ENCODE measurements at regions of chr2 and their contacts with region 1.

Region 1: GRCh38 chr2:162301151-162301804 is 17.2 kb downstream of the IFIH1 start:
- DNase-seq: peak; percentile 55
- H3K4me3 ChIP-seq: no peak overlapping the region
- H3K27ac ChIP-seq: no peak overlapping the region
- H3K27me3 ChIP-seq: no peaks in the 10 kb centered on the region
- CTCF ChIP-seq: peak; percentile 83

Region 2: GRCh38 chr2:162153608-162154224 is 147.6 kb before region 1 on chr2:
- CTCF ChIA-PET with region 1: interaction called, 344 read pairs
- POLR2A ChIA-PET with region 1: no interaction called
- DNase-seq: no peak
- H3K4me3 ChIP-seq: no peak overlapping the region
- H3K27ac ChIP-seq: no peak overlapping the region
- H3K27me3 ChIP-seq: no peaks in the 10 kb centered on the region
- CTCF ChIP-seq: peak; percentile 71

Region 3: DNA sequence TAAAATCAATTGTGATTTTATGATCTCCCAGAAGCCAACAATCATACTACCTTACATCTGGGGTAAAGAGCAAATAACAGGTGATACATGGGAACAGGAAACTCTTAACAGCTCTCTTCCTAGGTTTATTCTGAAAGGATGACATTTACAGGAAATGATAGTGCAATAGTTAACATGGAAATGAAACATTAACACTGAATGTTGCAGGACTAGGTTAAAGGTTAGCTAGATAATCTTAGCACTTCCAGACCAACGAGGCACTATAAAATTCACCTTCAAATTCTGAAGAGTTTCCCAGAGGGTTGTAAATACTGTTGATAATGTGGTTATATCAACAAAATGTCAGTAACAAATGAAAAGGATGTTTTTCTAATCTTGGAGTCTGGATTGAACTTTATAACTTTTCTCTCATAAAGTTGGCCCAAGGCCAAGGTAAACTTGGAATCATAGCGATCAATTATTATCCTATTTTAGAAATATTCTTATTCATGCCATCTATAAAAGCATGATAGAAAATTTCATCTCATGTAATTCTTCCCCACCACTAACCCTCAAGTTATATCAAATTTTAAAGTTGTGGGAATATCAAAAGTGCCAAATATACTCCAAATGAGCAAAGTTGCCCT is 116.3 kb before region 1 on chr2:
- CTCF ChIA-PET with region 1: interaction called, 10 read pairs
- POLR2A ChIA-PET with region 1: no interaction called
- DNase-seq: no peak
- H3K4me3 ChIP-seq: no peak overlapping the region
- H3K27ac ChIP-seq: no peak overlapping the region
- H3K27me3 ChIP-seq: no peaks in the 10 kb centered on the region
- CTCF ChIP-seq: no peak

Region 4: GRCh38 chr2:162221064-162221463 is 80.2 kb before region 1 on chr2:
- CTCF ChIA-PET with region 1: interaction called, 222 read pairs
- POLR2A ChIA-PET with region 1: interaction called, 3 read pairs
- DNase-seq: no peak
- H3K4me3 ChIP-seq: no peak overlapping the region
- H3K27ac ChIP-seq: no peak overlapping the region
- H3K27me3 ChIP-seq: no peaks in the 10 kb centered on the region
- CTCF ChIP-seq: peak; percentile 88

Region 5: DNA sequence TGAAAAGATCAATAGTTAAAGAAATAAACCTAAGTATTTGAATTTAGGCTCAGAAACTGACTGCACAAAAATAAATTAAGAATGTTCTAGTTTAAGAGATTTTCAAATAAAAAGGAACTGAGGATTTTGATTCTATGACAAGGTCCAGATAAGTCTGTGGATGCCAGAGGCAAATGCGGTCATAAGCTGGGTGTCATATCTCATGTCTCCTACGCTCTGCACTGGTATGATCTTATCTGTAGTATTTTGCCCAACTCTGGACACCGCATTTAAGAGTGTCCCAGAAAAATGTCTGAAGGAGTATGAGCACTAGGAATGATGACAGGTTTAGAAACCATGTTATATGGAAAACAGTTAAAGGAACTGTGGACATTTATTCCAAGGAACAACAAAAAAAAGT is 15.5 kb before region 1 on chr2:
- CTCF ChIA-PET with region 1: interaction called, 29 read pairs
- POLR2A ChIA-PET with region 1: no interaction called
- DNase-seq: no peak
- H3K4me3 ChIP-seq: no peak overlapping the region
- H3K27ac ChIP-seq: no peak overlapping the region
- H3K27me3 ChIP-seq: no peaks in the 10 kb centered on the region
- CTCF ChIP-seq: no peak

Region 6: DNA sequence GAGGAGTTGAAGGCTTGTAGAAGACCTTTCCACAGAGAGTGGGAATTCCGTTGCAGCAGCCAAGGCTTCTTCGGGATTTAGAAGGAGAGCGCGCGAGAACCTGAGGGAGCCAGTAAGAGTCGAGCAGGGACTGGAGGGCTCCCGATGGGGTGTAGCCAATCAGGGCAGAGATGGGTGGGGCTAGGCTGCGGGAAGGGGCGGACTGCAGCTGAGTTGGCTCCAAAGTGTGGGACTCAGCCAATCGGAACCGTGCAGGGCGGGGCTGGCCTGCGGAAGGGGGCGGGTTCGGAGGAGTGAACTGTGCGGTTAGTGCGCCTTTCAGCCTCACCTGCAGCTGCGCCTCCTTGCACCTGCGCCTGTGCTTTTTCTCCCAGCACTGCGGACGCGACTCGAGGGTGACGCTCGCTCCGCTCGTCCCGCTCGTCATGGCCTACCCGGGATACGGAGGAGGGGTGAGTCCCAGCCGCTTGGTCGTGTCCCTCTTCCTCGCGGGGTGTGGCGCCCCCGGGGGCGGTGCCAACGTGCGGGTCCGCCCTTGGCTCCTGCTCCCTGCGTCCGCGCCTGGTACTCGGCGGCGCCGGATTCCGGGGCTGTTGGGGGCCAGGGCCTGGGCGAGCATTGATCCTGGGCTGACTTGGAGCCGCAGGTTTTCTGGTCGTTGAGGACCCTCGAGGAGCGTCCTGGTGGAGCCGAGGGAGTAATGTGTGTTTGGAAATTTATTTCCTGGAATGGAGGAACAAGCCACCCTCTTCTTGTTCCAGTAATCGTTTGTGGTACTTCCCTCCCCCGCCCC is 42.7 kb after region 1 on chr2 and contains the start of gene GCA:
- CTCF ChIA-PET with region 1: no interaction called
- POLR2A ChIA-PET with region 1: no interaction called
- DNase-seq: peak; percentile 70
- H3K4me3 ChIP-seq: peak within 1 kb of the TSS; percentile 82
- H3K27ac ChIP-seq: no peak within 1 kb of the TSS
- H3K27me3 ChIP-seq: no peaks in the 10 kb centered on the region
- CTCF ChIP-seq: no peak
- polyA plus RNA-seq, gene GCA: 1.8 and 2.5 TPM in 2 replicates

Region 7: DNA sequence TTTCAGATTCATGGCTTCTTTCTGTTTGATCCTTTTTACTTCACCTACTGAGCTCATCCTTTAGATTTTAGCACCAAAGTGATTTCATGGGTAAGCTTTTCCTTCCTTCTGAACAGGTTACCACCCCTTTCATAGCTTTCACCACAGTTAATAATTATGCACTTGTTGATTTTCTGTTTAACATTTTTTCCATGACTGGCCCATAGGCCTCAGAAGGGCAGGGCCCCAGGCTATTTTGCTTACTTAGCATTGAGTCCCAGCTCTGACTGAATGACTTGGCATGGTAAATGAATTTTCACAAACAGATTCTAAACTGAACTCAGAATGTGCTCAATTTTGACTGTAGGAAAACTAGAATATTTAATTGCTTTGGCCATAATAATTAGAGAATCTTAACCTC is 219.7 kb after region 1 on chr2:
- CTCF ChIA-PET with region 1: no interaction called
- POLR2A ChIA-PET with region 1: no interaction called
- DNase-seq: no peak
- H3K4me3 ChIP-seq: no peak overlapping the region
- H3K27ac ChIP-seq: no peak overlapping the region
- H3K27me3 ChIP-seq: no peaks in the 10 kb centered on the region
- CTCF ChIP-seq: no peak